Activated CD4-positive, alpha-beta T cell treated with anti-CD3 and anti-CD28 coated beads, Interleukin-2, amount 10 ng/mL, durations not matched to agents 7 days and 5 days (primary cell): ENCODE measurements at regions of chr19 and their contacts with region 1.

Region 1: DNA sequence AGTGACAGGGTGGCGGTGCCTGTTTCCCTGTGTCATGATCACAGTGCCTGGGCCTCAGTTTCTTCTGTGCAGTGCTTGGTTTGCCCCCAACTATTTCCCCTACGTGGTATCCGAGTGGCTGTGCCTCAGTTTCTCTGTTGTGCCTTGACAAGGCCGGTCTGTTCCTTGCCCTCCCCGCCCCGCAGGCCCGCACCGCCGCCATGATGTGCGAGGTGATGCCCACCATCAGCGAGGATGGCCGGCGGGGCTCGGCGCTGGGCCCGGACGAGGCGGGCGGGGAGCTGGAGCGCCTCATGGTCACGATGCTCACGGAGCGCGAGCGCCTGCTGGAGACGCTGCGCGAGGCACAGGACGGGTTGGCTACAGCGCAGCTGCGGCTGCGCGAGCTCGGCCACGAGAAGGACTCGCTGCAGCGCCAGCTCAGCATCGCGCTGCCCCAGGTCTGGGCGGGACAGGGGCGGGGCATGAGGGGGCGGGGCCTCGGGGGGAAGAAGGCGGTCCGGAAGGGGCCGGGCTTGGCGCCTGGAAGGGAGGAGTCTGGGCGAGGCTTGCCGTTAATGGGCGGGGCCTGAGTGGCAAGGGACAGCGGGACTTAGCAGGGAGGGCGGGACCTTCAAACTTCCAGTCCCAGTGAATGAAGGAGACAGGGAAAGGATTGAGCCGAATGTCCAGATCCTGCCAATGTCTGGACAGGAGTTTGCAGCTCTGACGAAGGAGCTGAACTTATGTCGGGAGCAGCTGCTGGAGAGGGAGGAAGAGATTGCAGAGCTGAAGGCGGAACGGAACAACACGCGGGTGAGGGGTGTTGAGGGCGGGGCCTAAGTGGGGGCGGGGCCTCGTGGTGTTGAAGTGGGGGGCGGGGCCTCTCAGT is 8.6 kb downstream of the PPFIA3 start:
- DNase-seq: peak; percentile 95
- H3K4me3 Mint-ChIP-seq: peak overlapping the region; percentile 81
- H3K27ac Mint-ChIP-seq: peak overlapping the region; percentile 91
- H3K4me1 Mint-ChIP-seq: peaks cover 17% of the 10 kb centered on the region
- H3K27me3 Mint-ChIP-seq: peaks cover 4% of the 10 kb centered on the region

Region 2: DNA sequence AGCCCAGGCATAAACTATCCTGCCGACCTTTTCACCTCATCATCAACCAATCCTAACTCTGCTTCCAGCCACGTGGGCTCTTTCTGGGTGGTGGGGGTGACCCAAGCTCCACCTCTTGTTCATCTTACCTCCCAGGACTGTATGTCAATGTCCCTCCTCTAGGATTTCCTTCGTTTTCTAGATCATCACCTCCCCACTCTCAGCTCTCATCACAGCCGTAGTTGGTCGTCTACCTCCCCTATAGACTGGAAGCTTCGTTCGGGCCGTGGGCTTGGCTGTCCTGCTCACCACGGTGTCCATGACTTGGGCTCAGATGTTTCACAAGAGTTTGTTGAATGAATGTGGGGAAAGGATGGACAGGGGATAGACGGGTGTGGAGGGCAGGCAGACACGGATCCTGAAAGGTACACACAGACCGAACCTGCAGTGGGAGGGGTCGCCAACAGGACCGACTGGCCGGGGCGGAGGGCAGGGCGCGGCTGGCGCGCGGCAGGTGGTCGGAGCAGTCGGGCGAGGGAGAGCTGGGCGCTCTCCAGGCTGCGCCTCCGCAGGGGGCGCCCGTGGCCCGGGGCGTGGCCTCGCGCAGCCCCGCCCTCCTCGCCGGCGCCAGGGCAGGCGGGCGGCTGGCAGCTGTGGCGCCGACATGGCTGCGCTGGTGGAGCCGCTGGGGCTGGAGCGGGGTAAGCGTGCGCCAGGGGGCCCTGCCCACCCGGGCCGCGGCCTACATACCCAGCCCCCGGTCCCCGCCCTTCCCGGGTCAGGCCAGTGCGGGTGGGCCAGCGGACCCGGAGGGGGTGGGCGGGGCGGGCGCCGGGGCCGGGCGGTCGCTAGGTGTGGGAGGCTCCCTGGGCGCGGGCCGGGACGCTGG is 13.9 kb before region 1 on chr19 and contains the start of gene LIN7B:
- CTCF ChIA-PET with region 1: interaction called, 24 read pairs
- POLR2A ChIA-PET with region 1: interaction called, 3 read pairs
- DNase-seq: peak; percentile 65
- H3K4me3 Mint-ChIP-seq: peak within 1 kb of the TSS; percentile 72
- H3K27ac Mint-ChIP-seq: peak within 1 kb of the TSS; percentile 13
- H3K4me1 Mint-ChIP-seq: peaks cover 31% of the 10 kb centered on the region
- H3K27me3 Mint-ChIP-seq: no peaks in the 10 kb centered on the region
- total RNA-seq, gene LIN7B: 5.6 TPM

Region 3: GRCh38 chr19:49145573-49146407 is 17.9 kb after region 1 on chr19:
- CTCF ChIA-PET with region 1: interaction called, 11 read pairs
- POLR2A ChIA-PET with region 1: no interaction called
- DNase-seq: peak; percentile 75
- H3K4me3 Mint-ChIP-seq: no peak overlapping the region
- H3K27ac Mint-ChIP-seq: no peak overlapping the region
- H3K4me1 Mint-ChIP-seq: peaks cover 42% of the 10 kb centered on the region
- H3K27me3 Mint-ChIP-seq: peaks cover 47% of the 10 kb centered on the region